ENCODE measurements at regions of chr1 and their contacts with region 1.

Region 1: DNA sequence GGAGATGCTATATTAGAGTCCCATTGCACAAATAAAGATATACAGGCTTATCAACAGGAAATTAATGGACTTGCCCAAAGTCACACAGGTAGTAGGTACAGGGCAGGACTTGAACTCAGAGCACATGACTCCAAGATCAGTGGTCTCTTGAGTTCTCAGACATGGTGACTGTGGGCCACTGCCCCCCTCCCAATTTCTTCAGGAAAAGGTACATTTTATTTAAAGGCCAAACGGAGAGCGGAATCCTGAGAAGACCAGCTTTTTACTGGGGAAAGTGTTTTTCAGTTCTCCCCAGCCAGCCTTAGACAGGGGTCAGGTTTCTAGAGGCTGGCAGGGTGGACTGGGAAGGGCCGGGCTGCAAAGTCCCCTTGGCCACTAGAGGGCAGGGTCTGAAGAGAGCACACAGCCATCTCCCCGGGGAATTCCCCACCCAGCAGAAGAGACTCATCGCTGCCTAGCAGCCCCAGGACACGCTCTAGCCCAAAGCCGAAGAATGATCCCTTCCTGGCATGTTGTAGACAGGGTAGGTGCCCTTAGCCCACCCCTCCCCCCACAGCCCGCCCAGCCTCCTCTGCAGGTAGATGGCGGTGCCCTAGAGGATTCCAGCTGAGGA is 29.7 kb downstream of the ACP6 start:
- DNase-seq: peak; percentile 85
- ATAC-seq: peak; percentile 98
- H3K4me3 Mint-ChIP-seq: no peak overlapping the region
- H3K27ac Mint-ChIP-seq: no peak overlapping the region
- H3K4me1 Mint-ChIP-seq: peaks cover 46% of the 10 kb centered on the region
- H3K27me3 Mint-ChIP-seq: no peaks in the 10 kb centered on the region

Region 2: DNA sequence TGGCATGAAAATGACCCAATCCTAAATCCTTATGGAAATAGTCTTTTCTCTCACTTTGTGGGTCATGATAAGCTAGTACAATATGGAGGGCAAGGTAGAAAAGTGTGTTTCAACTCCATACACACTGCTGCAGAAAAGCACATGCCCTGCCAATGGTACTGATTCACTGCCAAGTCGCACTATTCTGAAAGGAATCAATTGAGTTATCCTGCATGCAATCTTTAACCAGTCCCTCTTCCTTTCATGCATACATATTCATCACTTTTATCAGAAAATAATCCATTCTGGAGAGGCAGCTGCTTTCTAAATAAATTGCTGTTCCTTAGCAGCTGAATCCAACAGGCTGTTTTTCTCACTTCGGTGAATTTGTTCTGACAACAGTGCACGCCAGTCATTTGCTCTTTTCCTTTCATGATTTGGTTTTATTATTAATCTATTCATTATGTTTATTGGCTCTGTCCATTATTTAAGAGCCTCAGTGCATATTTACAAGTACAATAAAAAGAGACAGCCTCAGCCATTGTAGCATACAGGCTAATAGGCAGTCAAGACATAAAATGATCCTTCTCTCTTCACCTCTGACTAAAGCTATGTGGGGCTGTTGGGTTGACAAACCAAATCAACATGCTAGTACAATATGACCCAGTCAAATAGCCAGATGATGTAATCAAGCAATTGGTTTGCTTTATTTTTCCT is 289.4 kb before region 1 on chr1:
- CTCF ChIA-PET with region 1: no interaction called
- POLR2A ChIA-PET with region 1: no interaction called
- DNase-seq: no peak
- ATAC-seq: no peak
- H3K4me3 Mint-ChIP-seq: no peak overlapping the region
- H3K27ac Mint-ChIP-seq: no peak overlapping the region
- H3K4me1 Mint-ChIP-seq: no peaks in the 10 kb centered on the region
- H3K27me3 Mint-ChIP-seq: peaks cover 11% of the 10 kb centered on the region

Region 3: GRCh38 chr1:147389532-147390524 is 250.8 kb before region 1 on chr1:
- CTCF ChIA-PET with region 1: no interaction called
- POLR2A ChIA-PET with region 1: no interaction called
- DNase-seq: peak; percentile 24
- ATAC-seq: peak; percentile 63
- H3K4me3 Mint-ChIP-seq: no peak overlapping the region
- H3K27ac Mint-ChIP-seq: no peak overlapping the region
- H3K4me1 Mint-ChIP-seq: no peaks in the 10 kb centered on the region
- H3K27me3 Mint-ChIP-seq: peaks cover 14% of the 10 kb centered on the region

Region 4: GRCh38 chr1:147494998-147495580 is 145.6 kb before region 1 on chr1:
- CTCF ChIA-PET with region 1: interaction called, 18 read pairs
- POLR2A ChIA-PET with region 1: no interaction called
- DNase-seq: peak; percentile 83
- ATAC-seq: peak; percentile 99
- H3K4me3 Mint-ChIP-seq: no peak overlapping the region
- H3K27ac Mint-ChIP-seq: no peak overlapping the region
- H3K4me1 Mint-ChIP-seq: peaks cover 7% of the 10 kb centered on the region
- H3K27me3 Mint-ChIP-seq: peaks cover 5% of the 10 kb centered on the region

Region 5: DNA sequence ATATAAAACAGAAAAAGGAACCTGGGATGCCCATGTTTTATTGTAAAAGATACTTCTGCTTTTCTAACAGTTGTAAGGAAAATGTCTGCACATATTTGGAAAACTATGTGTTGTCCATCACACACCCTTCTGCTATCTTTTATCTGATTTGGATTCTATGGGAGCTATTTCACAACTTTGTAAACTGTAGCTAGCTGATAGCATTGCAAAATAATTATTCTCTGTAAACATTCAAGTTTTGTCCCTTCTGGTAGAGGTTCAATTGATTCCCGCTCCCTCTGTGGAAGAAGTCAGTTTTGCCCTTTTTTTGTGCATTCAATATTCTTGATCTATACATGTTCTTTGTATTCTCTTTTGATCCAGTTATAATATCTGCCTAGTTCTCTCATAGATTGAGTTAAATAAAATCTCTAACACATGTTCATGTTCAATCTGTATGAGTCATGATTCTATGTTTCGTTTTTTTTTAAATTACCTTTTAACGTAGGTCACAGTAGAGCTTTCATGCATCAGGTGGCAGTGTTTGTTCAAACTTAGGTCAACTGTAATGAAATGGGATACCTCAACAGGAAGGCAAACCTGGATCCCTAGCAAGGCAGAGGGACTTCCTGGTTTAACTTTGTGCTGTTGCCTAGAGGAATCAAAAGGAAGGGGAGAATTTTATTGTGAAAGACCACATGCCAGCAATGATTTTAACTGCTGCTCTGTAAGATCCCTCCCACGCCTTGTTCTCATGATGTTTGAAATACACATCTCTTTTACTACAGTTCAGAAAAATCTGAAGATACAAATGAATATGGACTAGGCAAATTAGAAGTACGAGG is 125.4 kb before region 1 on chr1:
- CTCF ChIA-PET with region 1: interaction called, 25 read pairs
- POLR2A ChIA-PET with region 1: no interaction called
- DNase-seq: peak; percentile 27
- ATAC-seq: no peak
- H3K4me3 Mint-ChIP-seq: no peak overlapping the region
- H3K27ac Mint-ChIP-seq: no peak overlapping the region
- H3K4me1 Mint-ChIP-seq: peaks cover 6% of the 10 kb centered on the region
- H3K27me3 Mint-ChIP-seq: peaks cover 16% of the 10 kb centered on the region